Mucosa of descending colon (tissue), 3 donors: ENCODE measurements at regions of chr4 and their contacts with region 1.

Region 1: GRCh38 chr4:169659716-169660670 is 39.6 kb downstream of the CLCN3 start:
- DNase-seq: peak in 1 of 3 donors; percentile 83
- ATAC-seq: peak; percentile 90
- H3K4me3 ChIP-seq: peak overlapping the region; percentile 12
- H3K4me1 ChIP-seq: peaks cover 18% of the 10 kb centered on the region
- CTCF ChIP-seq: no peak

Region 2: GRCh38 chr4:169619959-169620879 is 39.8 kb before region 1 on chr4 and contains the start of gene CLCN3:
- intact Hi-C with region 1: loop called in 1 of 2 experiments (anchors 5 kb)
- DNase-seq: peak; percentile 98 to 99 (median 99)
- ATAC-seq: peak; percentile 94
- H3K4me3 ChIP-seq: peak within 1 kb of the TSS; percentile 54
- H3K4me1 ChIP-seq: peaks cover 26% of the 10 kb centered on the region
- CTCF ChIP-seq: peak; percentile 32
- total RNA-seq, gene CLCN3: 68.2 to 127 (median 125) TPM

Region 3: GRCh38 chr4:169690787-169691186 is 30.8 kb after region 1 on chr4:
- intact Hi-C with region 1: no loop called
- DNase-seq: no peak
- ATAC-seq: no peak
- H3K4me3 ChIP-seq: no peak overlapping the region
- H3K4me1 ChIP-seq: no peaks in the 10 kb centered on the region
- CTCF ChIP-seq: no peak

Region 4: GRCh38 chr4:169899295-169899694 is 239.3 kb after region 1 on chr4:
- intact Hi-C with region 1: no loop called
- DNase-seq: no peak
- ATAC-seq: no peak
- H3K4me3 ChIP-seq: no peak overlapping the region
- H3K4me1 ChIP-seq: no peaks in the 10 kb centered on the region
- CTCF ChIP-seq: no peak